Naive thymus-derived CD4-positive, alpha-beta T cell (primary cell): ENCODE measurements at regions of chr5 and their contacts with region 1.

Region 1: GRCh38 chr5:39194466-39195136 is 24.8 kb downstream of the FYB1 start:
- DNase-seq: peak in 1 of 9 donors; percentile 17
- ATAC-seq: no peak
- H3K4me3 ChIP-seq: peak overlapping the region; percentile 46
- H3K4me3 Mint-ChIP-seq: peak overlapping the region; percentile 75 to 98 (median 88)
- H3K27ac ChIP-seq: peak overlapping the region; percentile 83
- H3K27ac Mint-ChIP-seq: peak overlapping the region; percentile 85 to 98 (median 94)
- H3K4me1 ChIP-seq: peaks cover 67 to 69% of the 10 kb centered on the region in 2 donors
- H3K4me1 Mint-ChIP-seq: peaks cover 52 to 78% (median 70%) of the 10 kb centered on the region in 7 donors
- H3K27me3 ChIP-seq: no peaks in the 10 kb centered on the region
- H3K27me3 Mint-ChIP-seq: no peaks in the 10 kb centered on the region

Region 2: DNA sequence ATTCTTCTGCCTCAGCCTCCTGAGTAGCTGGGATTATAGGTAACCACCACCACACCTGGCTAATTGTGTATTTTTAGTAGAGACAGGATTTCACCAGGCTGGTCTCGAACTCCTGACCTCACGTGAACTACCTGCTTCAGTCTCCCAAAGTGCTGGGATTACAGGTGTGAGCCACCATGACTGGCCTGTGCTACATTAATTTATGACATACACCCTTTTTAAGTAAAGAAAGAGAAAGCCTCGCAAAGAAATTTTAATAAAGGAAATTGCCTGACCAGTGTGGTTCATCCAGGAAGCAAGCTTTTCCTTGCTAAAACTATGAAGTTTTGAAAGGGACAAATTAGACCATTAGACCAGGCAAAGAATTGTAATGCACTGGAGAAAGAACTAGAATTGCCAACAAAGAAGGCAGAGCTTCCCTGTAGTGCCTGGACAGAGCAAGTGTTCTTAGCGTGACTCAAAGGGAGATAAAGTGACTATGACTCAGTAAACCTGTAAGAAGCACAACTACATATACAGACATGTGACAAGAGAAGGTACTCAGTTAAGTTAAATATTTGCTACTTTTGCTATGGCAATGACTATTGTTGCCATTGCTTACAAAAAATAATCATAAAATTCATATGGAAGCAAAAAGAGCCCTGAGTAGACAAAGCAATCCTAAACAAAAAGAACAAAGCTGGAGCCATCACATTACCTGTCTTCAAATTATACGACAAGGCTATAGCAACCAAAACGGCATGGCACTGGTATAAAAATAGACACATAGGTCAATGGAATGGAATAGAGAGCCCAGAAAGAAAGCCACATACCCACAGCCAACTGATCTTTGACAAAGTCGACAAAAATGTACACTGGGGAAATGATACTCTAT is 29.8 kb before region 1 on chr5:
- CTCF ChIA-PET with region 1: interaction called, 3 read pairs
- POLR2A ChIA-PET with region 1: interaction called, 679 read pairs
- intact Hi-C with region 1: loop called in 1 of 2 experiments (anchors 1 kb)
- DNase-seq: peak in 1 of 9 donors; percentile 34
- ATAC-seq: peak; percentile 71
- H3K4me3 ChIP-seq: peak overlapping the region; percentile 12
- H3K4me3 Mint-ChIP-seq: peak overlapping the region; percentile 58 to 83 (median 76)
- H3K27ac ChIP-seq: peak overlapping the region; percentile 60
- H3K27ac Mint-ChIP-seq: peak overlapping the region; percentile 78 to 96 (median 89)
- H3K4me1 ChIP-seq: peaks cover 73 to 74% of the 10 kb centered on the region in 2 donors
- H3K4me1 Mint-ChIP-seq: peaks cover 71 to 99% (median 95%) of the 10 kb centered on the region in 7 donors
- H3K27me3 ChIP-seq: no peaks in the 10 kb centered on the region
- H3K27me3 Mint-ChIP-seq: no peaks in the 10 kb centered on the region

Region 3: GRCh38 chr5:39231705-39232525 is 37.3 kb after region 1 on chr5:
- CTCF ChIA-PET with region 1: no interaction called
- POLR2A ChIA-PET with region 1: no interaction called
- intact Hi-C with region 1: no loop called
- DNase-seq: no peak
- ATAC-seq: peak; percentile 48
- H3K4me3 ChIP-seq: no peak overlapping the region
- H3K4me3 Mint-ChIP-seq: peak overlapping the region in 2 of 10 donors; percentile 39 to 55
- H3K27ac ChIP-seq: no peak overlapping the region
- H3K27ac Mint-ChIP-seq: peak overlapping the region in 3 of 9 donors; percentile 37 to 82 (median 65)
- H3K4me1 ChIP-seq: peaks cover 0 to 10% of the 10 kb centered on the region in 2 donors
- H3K4me1 Mint-ChIP-seq: peaks cover 12 to 25% (median 15%) of the 10 kb centered on the region in 7 donors
- H3K27me3 ChIP-seq: no peaks in the 10 kb centered on the region
- H3K27me3 Mint-ChIP-seq: no peaks in the 10 kb centered on the region